HEK293 (cell line): ENCODE measurements at regions of chr11 and their contacts with region 1.

Region 1: DNA sequence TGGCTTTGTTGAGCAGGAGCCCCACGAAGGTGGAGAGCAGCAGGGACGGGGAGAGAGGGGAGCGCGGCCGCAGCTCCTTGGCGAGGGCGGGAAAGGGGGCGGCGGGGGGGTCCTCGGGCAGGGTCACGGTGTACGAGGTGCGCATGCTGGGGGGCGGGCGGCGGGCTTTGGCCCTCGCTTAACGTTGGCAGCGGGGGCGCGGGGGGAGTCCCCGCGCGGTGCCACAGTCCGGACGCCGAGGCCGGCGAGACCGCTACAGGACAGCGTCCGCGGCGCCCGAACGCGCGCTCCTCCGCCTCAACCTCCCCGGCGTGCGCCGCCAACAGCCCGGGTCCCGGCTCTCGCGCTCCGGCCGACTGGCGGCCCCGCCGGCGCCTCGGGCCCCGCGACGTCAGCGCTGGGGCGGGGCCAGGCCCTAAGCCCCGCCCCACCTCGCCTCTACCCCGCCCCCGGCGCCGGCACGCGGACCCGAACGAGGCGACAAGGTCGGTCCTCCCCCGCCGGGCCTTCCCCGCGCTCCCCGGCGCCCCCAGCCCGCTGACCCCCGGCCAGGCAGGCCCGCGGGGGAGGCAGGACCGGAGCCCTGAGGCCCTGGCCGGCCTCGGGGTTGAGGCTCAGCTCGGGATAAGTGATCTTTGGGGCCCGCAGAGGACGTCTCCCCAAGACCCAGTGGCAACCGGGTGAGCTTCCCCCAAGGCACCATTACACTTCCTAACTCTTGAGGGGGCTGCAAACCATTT is 17.5 kb downstream of the USP2 start:
- H3K4me3 ChIP-seq: peak overlapping the region; percentile 32
- H3K27ac ChIP-seq: no peak overlapping the region; the same call in 1 of the 2 replicates
- H3K4me1 ChIP-seq: peaks cover 9% of the 10 kb centered on the region
- CTCF ChIP-seq: no peak

Region 2: GRCh38 chr11:118918128-118918685 is 445.8 kb before region 1 on chr11:
- CTCF ChIA-PET with region 1: no interaction called
- POLR2A ChIA-PET with region 1: no interaction called
- H3K4me3 ChIP-seq: no peak overlapping the region; the same call in 1 of the 2 replicates
- H3K27ac ChIP-seq: peak overlapping the region; percentile 65
- H3K4me1 ChIP-seq: peaks cover 21% of the 10 kb centered on the region
- CTCF ChIP-seq: no peak

Region 3: DNA sequence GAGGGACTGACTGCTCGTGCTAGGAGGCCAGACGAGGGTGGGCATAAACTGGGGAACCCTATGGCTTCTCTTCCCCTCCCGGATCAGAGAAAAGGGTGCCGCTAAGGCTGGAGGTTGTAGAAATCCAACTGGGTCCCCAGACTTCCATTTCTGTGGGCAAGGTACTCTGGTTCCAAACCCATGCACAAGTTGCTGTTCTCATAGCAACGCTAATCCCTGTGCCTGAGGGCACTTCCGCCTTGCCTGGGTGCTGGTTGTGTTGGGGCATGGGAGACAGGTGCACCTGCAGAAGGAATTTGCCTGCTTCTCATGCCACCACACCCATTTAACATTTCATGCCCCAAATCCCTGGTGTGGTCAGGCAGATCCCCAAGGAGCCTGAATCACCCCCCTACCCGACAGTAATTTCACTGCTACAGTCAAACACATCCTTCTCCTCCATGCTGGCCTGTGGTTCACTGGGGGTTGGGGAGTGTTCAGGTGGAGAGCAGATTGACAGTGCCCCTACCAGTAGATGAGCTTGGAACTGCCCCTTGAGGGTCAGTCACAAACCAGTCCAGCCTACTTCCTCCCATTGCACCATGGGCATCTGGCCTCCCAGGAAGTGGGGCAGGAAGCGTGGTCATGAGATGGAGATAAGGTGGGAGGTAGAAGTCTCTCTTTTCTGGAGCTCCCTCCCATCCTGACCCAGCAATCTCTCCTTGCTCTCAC is 255.7 kb before region 1 on chr11:
- CTCF ChIA-PET with region 1: no interaction called
- POLR2A ChIA-PET with region 1: no interaction called
- H3K4me3 ChIP-seq: peak overlapping the region; percentile 79
- H3K27ac ChIP-seq: peak overlapping the region; percentile 53; the same call in 1 of the 2 replicates
- H3K4me1 ChIP-seq: no peaks in the 10 kb centered on the region
- CTCF ChIP-seq: no peak

Region 4: GRCh38 chr11:119315131-119316015 is 48.6 kb before region 1 on chr11:
- CTCF ChIA-PET with region 1: interaction called, 4 read pairs
- POLR2A ChIA-PET with region 1: interaction called, 15 read pairs
- H3K4me3 ChIP-seq: peak overlapping the region; percentile 67
- H3K27ac ChIP-seq: no peak overlapping the region
- H3K4me1 ChIP-seq: no peaks in the 10 kb centered on the region
- CTCF ChIP-seq: no peak

Region 5: DNA sequence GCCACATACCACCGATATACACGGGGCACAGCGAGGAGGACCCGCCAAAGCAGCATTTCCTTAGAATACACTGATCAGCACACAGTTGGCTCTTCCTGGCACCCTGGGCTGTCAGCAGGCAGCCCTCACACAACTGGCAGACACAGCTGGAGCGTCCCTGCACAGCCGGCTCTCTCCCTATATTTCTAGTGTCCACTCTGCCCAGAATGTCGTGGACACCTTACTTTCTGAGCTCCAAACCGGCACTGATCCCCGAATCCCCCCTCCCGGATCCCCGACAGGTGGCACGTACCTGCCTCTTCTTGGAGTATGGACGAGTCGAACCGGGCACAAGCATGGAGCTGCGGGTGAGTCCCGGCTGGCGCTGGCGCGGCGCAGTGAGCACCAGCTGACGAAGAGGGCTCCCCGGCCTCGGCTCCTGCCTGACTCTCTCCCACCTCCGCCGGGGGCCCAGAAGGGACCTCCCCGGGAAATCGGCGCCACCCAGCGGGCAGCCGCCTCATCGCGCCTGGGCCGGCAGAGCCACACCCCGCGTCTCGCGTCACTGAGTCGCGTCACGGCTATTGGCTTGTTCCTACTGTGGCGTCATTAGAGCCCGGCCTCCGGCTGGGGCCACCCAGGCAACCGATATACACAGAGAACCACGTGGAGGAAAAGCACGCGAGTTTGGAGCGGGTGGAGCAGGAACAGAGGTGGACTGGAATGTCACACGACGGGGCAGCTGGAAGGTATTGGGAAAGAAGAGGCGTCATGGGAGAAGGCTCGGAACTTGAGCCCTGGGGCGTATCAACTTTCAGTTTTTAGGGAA is 17.4 kb after region 1 on chr11 and contains the start of gene USP2:
- CTCF ChIA-PET with region 1: interaction called, 17 read pairs
- POLR2A ChIA-PET with region 1: interaction called, 5 read pairs
- H3K4me3 ChIP-seq: peak within 1 kb of the TSS; percentile 45
- H3K27ac ChIP-seq: no peak within 1 kb of the TSS
- H3K4me1 ChIP-seq: no peaks in the 10 kb centered on the region; the same call in 1 of the 2 replicates
- CTCF ChIP-seq: peak; percentile 95

Region 6: GRCh38 chr11:119460582-119460981 is 96.6 kb after region 1 on chr11:
- CTCF ChIA-PET with region 1: no interaction called
- POLR2A ChIA-PET with region 1: no interaction called
- H3K4me3 ChIP-seq: no peak overlapping the region
- H3K27ac ChIP-seq: no peak overlapping the region
- H3K4me1 ChIP-seq: no peaks in the 10 kb centered on the region
- CTCF ChIP-seq: no peak

Region 7: DNA sequence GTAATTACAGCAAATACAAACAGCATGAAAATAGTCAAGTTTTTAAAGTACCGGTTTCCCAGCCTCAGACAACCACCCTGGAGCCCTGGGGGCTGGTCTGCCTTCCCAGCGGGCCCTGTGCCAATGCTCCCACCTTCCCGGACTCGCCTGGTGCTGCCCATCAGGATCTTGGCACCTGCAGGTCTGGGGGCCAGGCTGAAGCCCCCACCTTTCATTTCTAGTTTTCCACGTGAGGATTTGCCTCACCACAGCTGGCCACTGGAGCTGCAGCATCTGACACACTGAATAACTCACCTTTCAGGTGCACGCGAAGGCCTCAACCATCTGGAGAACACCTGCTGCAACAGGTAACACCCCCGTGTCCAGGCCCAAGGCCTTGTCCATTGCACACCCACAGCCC is 167.6 kb after region 1 on chr11:
- CTCF ChIA-PET with region 1: no interaction called
- POLR2A ChIA-PET with region 1: no interaction called
- H3K4me3 ChIP-seq: no peak overlapping the region
- H3K27ac ChIP-seq: no peak overlapping the region
- H3K4me1 ChIP-seq: no peaks in the 10 kb centered on the region
- CTCF ChIP-seq: no peak